ENCODE measurements at regions of chr9 and their contacts with region 1.

Region 1: GRCh38 chr9:24594234-24594850 is 48.6 kb upstream of the IZUMO3 start:
- DNase-seq: no peak
- H3K4me3 Mint-ChIP-seq: no peak overlapping the region
- H3K27ac Mint-ChIP-seq: no peak overlapping the region
- H3K4me1 Mint-ChIP-seq: no peaks in the 10 kb centered on the region
- H3K27me3 Mint-ChIP-seq: no peaks in the 10 kb centered on the region
- CTCF ChIP-seq: no peak

Region 2: DNA sequence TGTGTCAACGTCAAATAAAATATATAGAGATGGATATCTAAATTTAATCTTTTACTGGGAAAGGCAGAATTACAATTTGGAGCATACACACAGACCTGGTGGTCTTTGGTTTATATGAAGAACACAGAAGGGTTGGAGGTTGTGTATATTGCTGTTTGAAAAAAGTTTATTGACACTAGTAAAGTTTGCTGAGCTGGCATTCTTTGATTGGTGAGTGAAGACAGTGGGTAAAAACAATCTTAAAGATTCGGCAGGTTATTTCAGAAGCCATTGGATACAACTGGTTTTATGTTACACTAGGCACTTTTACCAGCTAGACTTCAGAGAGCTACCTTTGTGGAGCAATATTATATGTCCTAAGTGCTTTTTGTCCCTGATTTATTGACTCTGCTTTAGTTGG is 75.8 kb before region 1 on chr9:
- CTCF ChIA-PET with region 1: no interaction called
- intact Hi-C with region 1: no loop called
- DNase-seq: no peak
- H3K4me3 Mint-ChIP-seq: no peak overlapping the region
- H3K27ac Mint-ChIP-seq: no peak overlapping the region
- H3K4me1 Mint-ChIP-seq: no peaks in the 10 kb centered on the region
- H3K27me3 Mint-ChIP-seq: no peaks in the 10 kb centered on the region
- CTCF ChIP-seq: no peak

Region 3: DNA sequence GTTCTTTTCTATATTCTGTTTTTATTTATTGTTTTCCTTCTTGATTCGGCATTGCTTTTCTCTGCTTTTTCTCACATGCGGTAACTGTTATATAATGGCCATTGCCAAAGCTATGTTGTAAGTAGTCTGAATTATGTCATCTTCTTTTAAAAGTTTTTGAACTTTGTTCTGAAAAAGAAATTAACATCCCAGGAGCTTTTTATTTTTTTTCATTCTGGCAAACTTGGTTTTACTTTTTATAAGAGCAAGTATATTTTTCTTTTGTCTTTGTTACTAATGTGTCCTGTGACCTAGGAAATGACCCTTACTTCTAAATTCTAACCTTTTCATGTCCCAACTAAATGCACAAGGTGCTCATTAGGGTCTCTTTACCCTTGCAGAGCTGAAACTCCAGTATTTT is 21.9 kb before region 1 on chr9:
- CTCF ChIA-PET with region 1: no interaction called
- intact Hi-C with region 1: loop called (anchors 2 kb)
- DNase-seq: no peak
- H3K4me3 Mint-ChIP-seq: no peak overlapping the region
- H3K27ac Mint-ChIP-seq: no peak overlapping the region
- H3K4me1 Mint-ChIP-seq: no peaks in the 10 kb centered on the region
- H3K27me3 Mint-ChIP-seq: no peaks in the 10 kb centered on the region
- CTCF ChIP-seq: no peak

Measured in Calu3 (cell line).